ENCODE measurements at regions of chr2 and their contacts with region 1.

Region 1: DNA sequence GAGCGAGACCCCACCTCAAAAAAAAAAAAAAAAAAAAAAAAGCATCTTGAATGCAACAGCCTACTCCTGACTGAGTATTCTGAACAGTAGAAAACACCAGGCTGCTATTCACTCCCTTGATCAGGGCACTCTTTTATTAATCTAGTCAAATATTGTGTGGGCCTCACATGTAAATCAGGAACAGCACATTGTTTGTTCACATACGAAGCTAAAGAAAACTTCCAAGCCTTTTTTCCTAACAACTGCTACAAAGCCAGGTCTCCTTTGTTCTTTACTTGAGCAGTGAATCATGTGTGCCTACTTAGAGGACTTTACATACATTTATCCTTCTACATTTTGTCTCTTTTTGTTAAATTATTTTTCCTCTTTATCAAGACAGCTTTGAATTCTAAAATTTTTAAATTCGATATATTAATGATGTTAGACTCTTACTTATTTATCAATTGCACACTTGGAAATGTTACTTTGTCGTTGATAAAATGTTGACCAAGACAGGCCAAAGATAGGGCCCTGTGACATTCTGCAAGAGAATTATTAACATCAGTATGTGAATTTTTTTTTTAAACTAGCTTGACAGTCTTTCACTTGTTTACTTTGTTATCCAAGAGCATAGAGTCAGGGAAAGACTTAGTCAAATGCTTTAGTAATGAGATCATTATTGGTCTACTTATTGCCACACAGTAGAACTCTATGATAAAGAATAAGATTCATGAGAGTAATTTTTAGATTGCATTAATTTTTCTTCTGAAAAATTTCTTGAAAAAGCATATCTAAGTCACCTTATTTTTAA is 13.2 kb downstream of the SPATS2L start:
- DNase-seq: peak in 1 of 5 donors; percentile 40
- H3K4me3 ChIP-seq: no peak overlapping the region
- H3K27ac ChIP-seq: no peak overlapping the region
- H3K4me1 ChIP-seq: peaks cover 0 to 23% (median 9%) of the 10 kb centered on the region in 3 donors
- H3K27me3 ChIP-seq: no peaks in the 10 kb centered on the region
- CTCF ChIP-seq: no peak

Region 2: DNA sequence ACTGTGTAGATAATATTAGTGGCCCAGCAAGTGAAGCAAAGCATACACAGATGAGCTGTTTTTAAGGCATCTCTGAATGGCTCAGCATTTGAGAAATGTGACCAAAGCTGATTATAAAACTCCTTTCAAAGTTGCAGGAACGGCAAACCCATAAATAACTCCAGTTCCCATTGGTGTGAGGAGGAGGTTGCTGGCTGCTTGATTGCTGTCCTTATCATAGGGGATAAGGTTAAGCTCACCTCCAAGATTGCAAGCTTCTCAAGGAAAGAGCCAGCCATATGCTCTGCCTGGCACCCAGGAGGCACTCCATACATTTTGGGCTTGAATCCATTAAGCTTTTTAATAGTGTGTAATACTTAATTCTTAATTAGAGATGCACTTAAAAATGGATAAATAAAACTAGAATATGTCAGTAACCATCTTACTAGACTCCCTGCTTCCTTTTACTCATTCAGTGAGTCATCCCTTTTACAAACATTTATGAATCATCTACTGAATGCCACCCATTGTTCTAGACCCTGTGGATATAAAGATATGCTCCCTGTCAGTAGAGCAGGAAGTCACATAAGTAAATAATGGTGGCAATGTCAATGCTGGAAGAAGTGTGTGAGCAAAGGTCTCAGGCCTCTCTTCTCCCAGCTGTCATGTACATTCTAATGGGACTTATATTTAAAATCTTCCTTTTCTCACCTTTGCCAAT is 86.0 kb after region 1 on chr2:
- intact Hi-C with region 1: loop called (anchors 5 kb)
- DNase-seq: no peak
- H3K4me3 ChIP-seq: no peak overlapping the region
- H3K27ac ChIP-seq: peak overlapping the region in 1 of 2 donors; percentile 57
- H3K4me1 ChIP-seq: peaks cover 4 to 13% (median 8%) of the 10 kb centered on the region in 3 donors
- H3K27me3 ChIP-seq: no peaks in the 10 kb centered on the region
- CTCF ChIP-seq: no peak

Measured in kidney (tissue), 22 donors.